ENCODE measurements at regions of chr7 and their contacts with region 1.

Region 1: DNA sequence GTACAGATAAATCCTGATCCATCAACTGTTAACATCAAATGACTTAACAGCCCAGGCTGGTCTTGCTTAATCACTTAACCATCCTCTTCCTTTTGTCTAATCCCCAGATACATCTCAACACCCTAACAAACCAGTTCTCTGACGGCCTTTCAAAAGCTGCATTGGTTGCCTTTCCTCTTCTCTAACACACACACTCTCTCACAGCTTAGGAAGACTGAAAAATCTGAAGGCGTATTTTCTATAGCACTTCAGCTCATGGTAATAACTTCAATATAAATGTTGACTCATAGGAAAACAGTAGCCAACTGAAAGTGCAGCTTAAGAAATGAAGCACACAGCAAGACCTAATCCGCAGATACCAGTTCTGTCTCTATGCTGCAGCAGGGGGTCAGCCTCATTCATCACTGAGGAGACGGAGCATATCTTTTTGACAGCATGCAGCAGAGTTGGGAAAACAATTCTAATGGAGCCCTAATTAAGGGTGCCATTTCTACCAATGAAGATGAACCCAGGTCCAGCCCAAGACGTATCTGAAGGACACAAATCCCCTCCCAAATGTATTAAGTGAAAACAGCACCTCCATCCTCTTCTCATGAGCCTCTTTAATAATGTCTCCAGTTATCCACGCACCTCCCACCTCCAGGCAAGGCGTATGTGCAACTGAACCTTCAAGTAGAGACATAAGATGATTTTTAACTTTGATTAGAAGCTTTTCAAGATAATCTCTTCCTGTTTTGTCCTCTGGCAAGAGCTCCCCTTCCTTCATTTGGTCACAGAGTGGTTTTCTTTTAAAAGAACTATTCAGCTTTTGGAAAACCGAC is 211.7 kb upstream of the NFE2L3 start:
- DNase-seq: no peak
- H3K4me3 Mint-ChIP-seq: peak overlapping the region; percentile 6
- H3K27ac Mint-ChIP-seq: peak overlapping the region; percentile 56
- H3K4me1 Mint-ChIP-seq: peaks cover 15% of the 10 kb centered on the region
- H3K27me3 Mint-ChIP-seq: peaks cover 17% of the 10 kb centered on the region

Region 2: DNA sequence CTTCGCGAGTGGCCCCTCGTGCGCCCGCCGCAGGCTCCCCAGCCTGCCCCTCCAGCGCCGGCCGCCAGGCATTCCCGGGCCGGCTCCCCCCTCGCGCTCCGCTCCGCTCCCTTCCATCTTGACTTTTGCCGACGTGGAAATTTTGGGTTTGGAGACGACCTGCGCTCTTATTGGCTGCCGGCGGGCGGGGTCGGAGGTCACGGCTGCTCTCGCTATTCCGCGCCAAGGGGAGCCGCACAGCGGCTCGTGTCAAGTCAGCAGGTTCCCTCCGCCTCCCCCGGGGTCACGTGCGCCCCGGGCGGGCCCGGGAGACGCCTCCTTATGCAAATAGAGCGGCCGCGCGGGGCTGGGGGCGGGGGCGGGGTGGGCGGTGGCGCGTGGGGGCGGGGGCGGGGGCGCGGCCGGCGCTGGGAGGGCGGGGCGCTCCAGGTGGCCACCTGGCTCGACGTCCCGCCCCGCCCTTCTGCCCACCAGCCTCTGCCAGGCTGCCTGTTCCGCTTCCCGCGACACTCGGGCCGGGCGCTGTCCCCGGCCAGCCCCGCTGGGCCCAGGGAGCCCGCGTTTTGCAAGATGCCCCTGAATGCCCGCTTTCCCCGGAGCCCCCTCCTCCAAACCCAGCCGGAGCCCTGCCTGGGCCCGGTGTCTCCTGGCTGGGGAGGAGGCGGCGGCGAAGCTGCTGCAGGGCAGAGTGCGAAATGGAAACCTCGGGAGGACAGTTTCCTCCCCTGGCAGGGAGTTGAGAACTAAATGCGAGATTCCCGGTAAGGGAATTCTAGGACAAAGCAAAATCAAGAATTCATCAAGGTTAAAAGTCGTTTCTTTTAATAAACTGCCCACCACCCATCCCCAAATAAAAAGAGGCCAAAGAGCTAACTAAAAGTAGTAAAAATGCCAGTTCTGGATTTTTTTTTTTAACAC is 11.0 kb after region 1 on chr7:
- CTCF ChIA-PET with region 1: no interaction called
- POLR2A ChIA-PET with region 1: no interaction called
- intact Hi-C with region 1: loop called (anchors 1 kb)
- DNase-seq: peak; percentile 91
- H3K4me3 Mint-ChIP-seq: peak overlapping the region; percentile 75
- H3K27ac Mint-ChIP-seq: peak overlapping the region; percentile 56
- H3K4me1 Mint-ChIP-seq: peaks cover 11% of the 10 kb centered on the region
- H3K27me3 Mint-ChIP-seq: peaks cover 4% of the 10 kb centered on the region